ENCODE measurements at regions of chr20 and their contacts with region 1.

Region 1: GRCh38 chr20:50750145-50750671 is 18.8 kb downstream of the PARD6B start:
- DNase-seq: peak in 1 of 2 experiments; percentile 21
- H3K4me3 ChIP-seq: no peak overlapping the region
- H3K4me3 Mint-ChIP-seq: no peak overlapping the region
- H3K27ac Mint-ChIP-seq: peak overlapping the region; percentile 57
- H3K4me1 ChIP-seq: peaks cover 60% of the 10 kb centered on the region
- H3K4me1 Mint-ChIP-seq: peaks cover 59% of the 10 kb centered on the region
- H3K27me3 ChIP-seq: no peaks in the 10 kb centered on the region
- H3K27me3 Mint-ChIP-seq: no peaks in the 10 kb centered on the region
- CTCF ChIP-seq: no peak

Region 2: DNA sequence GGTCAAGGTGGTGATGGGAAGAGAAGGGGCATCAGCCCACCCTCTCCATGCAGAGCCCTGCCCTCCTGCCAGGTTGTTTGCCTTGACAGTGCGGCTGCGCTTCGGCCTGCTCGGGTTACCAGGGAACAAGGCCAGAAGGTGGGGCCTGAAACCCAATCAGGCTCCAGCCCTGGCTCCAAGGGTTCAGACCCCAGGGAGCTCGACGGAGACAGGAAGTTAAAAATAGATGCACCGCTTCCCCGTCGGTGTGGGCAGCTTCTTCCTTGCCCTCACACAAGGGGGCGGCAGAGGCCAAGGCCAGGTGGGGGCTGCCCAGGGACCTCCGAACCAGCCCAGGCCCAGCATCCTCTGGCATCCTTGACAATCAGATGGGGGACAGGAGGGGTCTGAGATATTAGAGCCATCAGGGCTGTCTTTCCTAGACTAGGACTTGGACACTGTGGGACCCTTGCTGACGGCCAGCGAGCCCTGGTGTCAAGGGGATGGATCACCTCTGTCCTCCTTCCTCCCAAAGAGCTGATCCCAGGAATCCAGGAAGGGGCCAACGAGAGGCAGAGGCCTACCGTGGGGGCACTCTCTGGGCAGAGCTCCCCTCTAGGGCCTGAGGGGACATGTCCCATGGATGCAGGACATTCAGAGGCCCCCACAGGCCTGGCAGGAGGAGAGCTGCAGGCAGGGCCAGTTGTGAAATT is 124.1 kb before region 1 on chr20:
- CTCF ChIA-PET with region 1: interaction called, 65 read pairs
- POLR2A ChIA-PET with region 1: no interaction called
- intact Hi-C with region 1: no loop called
- DNase-seq: peak; percentile 85 to 91
- H3K4me3 ChIP-seq: no peak overlapping the region
- H3K4me3 Mint-ChIP-seq: no peak overlapping the region
- H3K27ac Mint-ChIP-seq: peak overlapping the region; percentile 23
- H3K4me1 ChIP-seq: peaks cover 41% of the 10 kb centered on the region
- H3K4me1 Mint-ChIP-seq: peaks cover 12% of the 10 kb centered on the region
- H3K27me3 ChIP-seq: no peaks in the 10 kb centered on the region
- H3K27me3 Mint-ChIP-seq: no peaks in the 10 kb centered on the region
- CTCF ChIP-seq: peak; percentile 96 to 97

Region 3: GRCh38 chr20:50690634-50691572 is 59.3 kb before region 1 on chr20 and contains the start of gene RIPOR3:
- CTCF ChIA-PET with region 1: interaction called, 10 read pairs
- POLR2A ChIA-PET with region 1: interaction called, 4 read pairs
- intact Hi-C with region 1: no loop called
- DNase-seq: no peak
- H3K4me3 ChIP-seq: no peak within 1 kb of the TSS
- H3K4me3 Mint-ChIP-seq: no peak within 1 kb of the TSS
- H3K27ac Mint-ChIP-seq: no peak within 1 kb of the TSS
- H3K4me1 ChIP-seq: peaks cover 28% of the 10 kb centered on the region
- H3K4me1 Mint-ChIP-seq: peaks cover 20% of the 10 kb centered on the region
- H3K27me3 ChIP-seq: no peaks in the 10 kb centered on the region
- H3K27me3 Mint-ChIP-seq: no peaks in the 10 kb centered on the region
- CTCF ChIP-seq: no peak
- total RNA-seq, gene RIPOR3: 0.18 and 0.67 TPM in 2 replicates

Region 4: GRCh38 chr20:50724851-50725721 is 25.1 kb before region 1 on chr20:
- CTCF ChIA-PET with region 1: interaction called, 45 read pairs
- POLR2A ChIA-PET with region 1: interaction called, 11 read pairs
- intact Hi-C with region 1: no loop called
- DNase-seq: peak; percentile 81 to 92
- H3K4me3 ChIP-seq: no peak overlapping the region
- H3K4me3 Mint-ChIP-seq: no peak overlapping the region
- H3K27ac Mint-ChIP-seq: no peak overlapping the region
- H3K4me1 ChIP-seq: peaks cover 70% of the 10 kb centered on the region
- H3K4me1 Mint-ChIP-seq: peaks cover 30% of the 10 kb centered on the region
- H3K27me3 ChIP-seq: no peaks in the 10 kb centered on the region
- H3K27me3 Mint-ChIP-seq: no peaks in the 10 kb centered on the region
- CTCF ChIP-seq: no peak

Region 5: DNA sequence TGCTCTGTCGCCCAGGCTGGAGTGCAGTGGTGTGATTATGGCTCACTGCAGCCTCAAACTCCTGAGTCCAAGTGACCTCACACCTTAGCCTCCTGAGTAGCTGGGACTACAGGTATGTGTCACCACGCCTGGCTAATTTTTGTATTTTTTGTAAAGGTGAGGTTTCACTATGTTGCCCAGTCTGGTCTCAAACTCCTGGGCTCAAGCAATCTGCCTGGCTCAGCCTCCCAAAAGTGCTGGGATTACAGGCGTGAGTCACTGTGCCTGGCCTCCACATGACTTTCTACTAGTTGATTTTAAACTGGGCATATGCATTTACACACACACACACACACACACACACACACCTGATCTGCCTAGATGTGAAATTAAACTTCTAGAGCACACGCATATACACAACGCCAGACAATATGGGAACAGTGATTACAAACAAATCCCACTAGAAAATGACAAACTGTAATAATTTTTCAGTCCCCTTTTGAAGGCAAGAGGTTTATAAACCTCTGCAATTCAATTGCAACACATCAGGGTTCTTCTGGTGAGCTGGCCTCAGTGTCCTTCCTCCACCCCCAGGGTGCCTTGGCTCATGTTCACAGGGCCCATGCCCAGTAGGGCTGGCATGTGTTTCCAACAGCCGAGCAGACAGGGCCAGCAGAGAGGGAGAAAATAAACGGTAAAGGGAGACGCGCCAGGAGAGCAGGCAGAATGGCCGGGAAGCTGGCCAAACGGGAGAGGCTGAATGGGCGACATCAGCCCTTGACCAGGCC is 12.4 kb after region 1 on chr20:
- CTCF ChIA-PET with region 1: interaction called, 18 read pairs
- POLR2A ChIA-PET with region 1: interaction called, 9 read pairs
- intact Hi-C with region 1: no loop called
- DNase-seq: peak; percentile 54 to 72
- H3K4me3 ChIP-seq: no peak overlapping the region
- H3K4me3 Mint-ChIP-seq: peak overlapping the region; percentile 78
- H3K27ac Mint-ChIP-seq: peak overlapping the region; percentile 100
- H3K4me1 ChIP-seq: peaks cover 87% of the 10 kb centered on the region
- H3K4me1 Mint-ChIP-seq: peaks cover 82% of the 10 kb centered on the region
- H3K27me3 ChIP-seq: no peaks in the 10 kb centered on the region
- H3K27me3 Mint-ChIP-seq: no peaks in the 10 kb centered on the region
- CTCF ChIP-seq: no peak

Region 6: DNA sequence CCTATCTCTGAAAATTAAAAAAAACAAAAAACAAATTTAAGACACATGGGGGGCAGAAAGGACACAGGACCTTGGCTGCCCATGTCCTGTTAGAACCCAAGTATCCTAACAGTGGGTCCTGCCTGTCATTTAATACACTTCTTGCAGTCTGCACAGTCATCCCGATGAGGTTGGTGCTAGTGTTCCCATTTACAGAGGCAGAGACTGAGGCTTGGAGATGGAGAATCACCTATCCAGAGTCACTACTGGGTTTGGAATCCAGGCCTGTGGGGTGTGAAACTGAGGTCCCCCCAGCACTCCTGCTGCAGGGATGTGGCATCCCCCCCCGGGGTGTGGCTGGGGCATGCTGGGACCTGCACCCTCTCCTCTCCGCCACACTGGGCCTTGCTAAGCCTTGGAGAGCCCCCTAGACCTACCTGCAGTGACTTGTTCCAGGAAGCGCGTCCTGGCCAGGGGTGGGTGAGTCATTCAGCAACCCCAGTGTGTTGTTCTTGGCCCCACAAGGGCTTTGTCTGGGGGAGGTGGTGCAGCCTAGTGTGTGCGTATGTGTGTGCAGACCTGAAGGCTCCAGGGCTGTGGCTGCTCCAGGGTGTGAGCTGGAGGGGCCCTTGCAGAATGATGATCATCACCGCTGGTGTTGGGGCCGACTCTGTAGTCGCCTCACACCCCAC is 94.4 kb after region 1 on chr20:
- CTCF ChIA-PET with region 1: no interaction called
- POLR2A ChIA-PET with region 1: no interaction called
- intact Hi-C with region 1: no loop called
- DNase-seq: no peak
- H3K4me3 ChIP-seq: no peak overlapping the region
- H3K4me3 Mint-ChIP-seq: no peak overlapping the region
- H3K27ac Mint-ChIP-seq: no peak overlapping the region
- H3K4me1 ChIP-seq: no peaks in the 10 kb centered on the region
- H3K4me1 Mint-ChIP-seq: no peaks in the 10 kb centered on the region
- H3K27me3 ChIP-seq: no peaks in the 10 kb centered on the region
- H3K27me3 Mint-ChIP-seq: no peaks in the 10 kb centered on the region
- CTCF ChIP-seq: no peak

Region 7: DNA sequence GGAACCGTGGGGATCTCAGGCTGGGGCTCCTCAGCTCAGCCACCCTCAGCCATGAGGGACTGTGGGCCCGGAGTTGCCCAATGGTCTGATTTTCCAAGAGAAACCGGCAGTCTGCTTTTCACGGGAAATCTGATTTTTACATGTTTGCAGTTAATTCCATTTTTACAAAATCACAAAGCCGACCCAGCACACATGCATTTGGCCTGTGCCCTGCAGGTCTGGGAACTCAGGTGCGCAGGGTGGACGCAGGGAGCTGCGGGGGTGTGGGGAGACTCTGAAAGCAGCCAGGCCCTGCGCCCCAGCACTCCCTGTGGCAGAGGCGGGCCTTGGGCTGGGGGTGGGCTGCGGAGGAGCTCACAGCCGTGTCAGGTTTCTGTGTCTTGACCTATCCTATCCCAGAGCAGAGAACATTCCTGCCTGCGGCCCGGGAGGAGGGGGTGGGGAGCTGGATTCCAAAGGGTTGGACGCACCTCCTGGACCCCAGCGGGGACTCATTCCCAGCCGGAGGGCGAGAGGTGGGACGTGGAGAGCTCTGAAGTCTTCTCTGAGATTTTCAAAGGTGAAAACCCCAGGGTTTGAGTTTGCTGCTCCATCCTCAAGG is 120.5 kb after region 1 on chr20:
- CTCF ChIA-PET with region 1: no interaction called
- POLR2A ChIA-PET with region 1: no interaction called
- intact Hi-C with region 1: no loop called
- DNase-seq: peak in 1 of 2 experiments; percentile 81
- H3K4me3 ChIP-seq: no peak overlapping the region
- H3K4me3 Mint-ChIP-seq: peak overlapping the region; percentile 58
- H3K27ac Mint-ChIP-seq: peak overlapping the region; percentile 15
- H3K4me1 ChIP-seq: peaks cover 11% of the 10 kb centered on the region
- H3K4me1 Mint-ChIP-seq: peaks cover 11% of the 10 kb centered on the region
- H3K27me3 ChIP-seq: no peaks in the 10 kb centered on the region
- H3K27me3 Mint-ChIP-seq: no peaks in the 10 kb centered on the region
- CTCF ChIP-seq: no peak

Region 8: GRCh38 chr20:51008718-51009117 is 258.5 kb after region 1 on chr20:
- CTCF ChIA-PET with region 1: no interaction called
- POLR2A ChIA-PET with region 1: no interaction called
- intact Hi-C with region 1: no loop called
- DNase-seq: no peak
- H3K4me3 ChIP-seq: no peak overlapping the region
- H3K4me3 Mint-ChIP-seq: no peak overlapping the region
- H3K27ac Mint-ChIP-seq: no peak overlapping the region
- H3K4me1 ChIP-seq: no peaks in the 10 kb centered on the region
- H3K4me1 Mint-ChIP-seq: no peaks in the 10 kb centered on the region
- H3K27me3 ChIP-seq: no peaks in the 10 kb centered on the region; the same call in none of the 2 replicates
- H3K27me3 Mint-ChIP-seq: peaks cover 8% of the 10 kb centered on the region
- CTCF ChIP-seq: no peak

Measured in Caco-2 (cell line).